AG04449 (cell line): ENCODE measurements at regions of chr15 and their contacts with region 1.

Region 1: GRCh38 chr15:81480645-81481053 is 106.6 kb upstream of the TMC3 start:
- DNase-seq: no peak
- H3K4me3 ChIP-seq: peak overlapping the region; percentile 29
- CTCF ChIP-seq: peak; percentile 30

Region 2: DNA sequence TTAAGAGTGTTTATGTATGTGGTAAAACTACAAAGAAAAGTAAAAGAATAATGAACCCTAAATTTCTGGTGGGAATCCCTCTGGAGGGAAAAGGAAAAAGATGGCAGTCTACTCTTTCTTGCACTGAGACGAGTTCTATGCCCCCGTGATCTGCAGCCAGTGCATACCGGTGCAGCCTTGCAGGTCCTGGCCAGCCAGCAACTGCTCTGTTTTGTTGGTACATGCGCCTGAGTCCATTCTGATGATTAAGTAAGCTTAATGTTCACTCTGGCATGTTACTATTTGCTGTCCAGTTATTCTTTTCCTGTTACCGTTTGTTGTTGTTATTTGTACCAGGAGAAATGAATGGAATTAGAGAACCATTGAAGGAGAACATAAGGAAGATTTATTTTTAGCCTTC is 11.5 kb before region 1 on chr15:
- CTCF ChIA-PET with region 1: interaction called, 16 read pairs
- POLR2A ChIA-PET with region 1: no interaction called
- DNase-seq: no peak
- H3K4me3 ChIP-seq: no peak overlapping the region
- CTCF ChIP-seq: no peak

Region 3: DNA sequence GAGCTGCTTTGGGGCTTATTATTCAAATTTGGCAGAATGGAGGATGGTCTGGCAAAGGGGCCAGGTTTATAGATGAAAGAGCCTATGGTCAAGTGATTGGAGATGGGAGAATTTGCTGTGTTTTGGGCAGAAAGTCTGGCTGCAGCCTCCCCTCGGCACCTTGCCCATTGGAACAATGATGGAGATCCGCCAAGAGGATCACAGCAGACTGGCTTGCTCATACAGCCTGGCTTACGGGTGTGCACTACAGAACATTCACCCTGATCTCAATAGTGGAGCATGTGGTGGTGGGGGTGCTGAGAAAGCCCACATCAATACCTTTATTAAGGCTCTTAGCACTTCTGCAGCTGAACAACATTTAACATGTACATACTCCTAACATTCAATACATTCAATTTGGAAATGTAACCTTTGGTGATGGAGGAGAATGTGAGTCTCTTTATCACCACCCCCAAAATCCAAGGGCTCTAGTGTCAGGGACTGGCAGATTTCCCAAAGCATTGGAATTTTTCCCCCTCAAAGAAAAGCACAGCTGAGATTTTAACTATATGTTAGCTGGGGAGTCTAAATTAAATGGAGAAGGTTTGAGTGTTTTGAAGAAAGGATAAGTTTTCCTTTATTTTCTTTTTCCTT is 11.8 kb after region 1 on chr15:
- CTCF ChIA-PET with region 1: interaction called, 16 read pairs
- POLR2A ChIA-PET with region 1: no interaction called
- DNase-seq: no peak
- H3K4me3 ChIP-seq: no peak overlapping the region
- CTCF ChIP-seq: no peak

Region 4: DNA sequence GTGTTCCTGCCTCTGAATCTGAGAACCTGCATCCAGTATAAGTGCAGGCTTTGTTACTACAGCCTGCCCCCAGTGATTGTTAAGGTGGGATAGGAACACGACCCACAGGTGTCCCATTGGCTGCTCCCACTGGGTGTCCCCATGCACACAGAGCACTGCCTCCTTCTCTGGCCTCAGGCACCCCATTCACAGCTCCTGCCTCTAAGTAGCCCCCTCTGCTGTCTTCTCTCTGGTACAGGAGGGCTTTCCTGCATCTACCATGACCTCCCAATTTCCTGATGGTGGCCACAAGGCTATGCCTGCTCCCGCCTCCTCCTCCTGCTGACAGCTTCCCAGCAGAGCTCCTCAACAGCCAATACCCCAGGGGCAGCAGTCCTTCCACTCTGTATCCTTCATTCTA is 132.0 kb after region 1 on chr15:
- CTCF ChIA-PET with region 1: no interaction called
- POLR2A ChIA-PET with region 1: no interaction called
- DNase-seq: no peak
- H3K4me3 ChIP-seq: no peak overlapping the region
- CTCF ChIP-seq: no peak

Region 5: DNA sequence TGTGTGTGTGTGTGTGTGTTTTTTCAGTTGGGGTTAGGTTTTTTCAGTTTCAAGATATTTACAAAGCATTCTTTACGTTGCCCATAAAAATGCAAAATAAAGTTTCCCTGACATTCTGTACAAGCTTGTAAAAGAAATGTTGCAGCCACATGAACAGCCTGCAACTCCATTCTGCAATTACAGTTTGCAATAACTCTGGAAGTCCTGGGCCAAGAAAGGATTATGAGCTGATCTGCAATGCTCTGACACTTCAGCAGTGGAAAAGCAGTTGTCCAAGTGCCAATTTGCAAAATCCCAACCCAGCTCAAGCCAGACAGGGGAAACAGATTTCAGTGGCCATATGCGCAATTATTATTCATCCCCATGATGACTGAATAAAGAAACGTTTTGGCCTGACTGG is 243.1 kb after region 1 on chr15:
- CTCF ChIA-PET with region 1: no interaction called
- POLR2A ChIA-PET with region 1: no interaction called
- DNase-seq: no peak
- H3K4me3 ChIP-seq: no peak overlapping the region
- CTCF ChIP-seq: no peak

Region 6: DNA sequence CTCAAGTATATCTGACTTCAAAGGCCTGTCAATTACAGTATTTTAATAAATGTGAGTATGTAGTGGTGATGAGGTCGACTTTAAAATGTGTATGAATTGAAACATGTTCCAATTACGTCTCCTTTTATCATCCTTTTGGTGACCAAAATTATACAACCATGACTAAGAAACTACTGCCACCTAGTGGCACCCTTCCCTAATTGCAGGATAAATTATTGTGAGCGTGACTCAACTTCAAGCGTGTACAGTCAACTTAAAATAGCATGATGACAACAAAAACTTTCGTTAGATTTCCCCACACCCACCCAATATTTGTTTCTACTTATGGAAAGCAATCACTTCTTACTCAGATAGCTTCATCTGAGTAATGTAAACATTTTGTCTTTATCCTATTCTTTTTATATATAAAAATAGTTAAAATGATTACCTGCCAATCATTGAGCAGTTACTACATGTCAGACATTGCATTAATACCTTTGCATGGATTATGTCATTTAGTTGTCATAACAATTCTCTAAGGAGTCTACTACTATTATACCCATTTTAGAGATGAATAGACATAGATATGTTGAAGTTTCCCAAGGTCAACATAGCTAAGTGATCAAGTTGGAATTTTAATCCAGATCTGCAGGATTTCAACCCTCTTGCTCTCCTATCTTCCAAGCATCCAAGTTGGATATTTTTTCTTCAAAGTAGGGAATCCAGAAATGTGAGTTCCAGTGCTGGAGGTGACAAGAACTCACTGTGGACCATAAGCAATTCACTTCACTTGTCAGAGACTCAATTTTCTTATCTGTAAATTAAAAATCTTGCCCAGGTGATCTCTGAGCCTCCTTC is 459.2 kb after region 1 on chr15:
- CTCF ChIA-PET with region 1: interaction called, 21 read pairs
- POLR2A ChIA-PET with region 1: no interaction called
- DNase-seq: no peak
- H3K4me3 ChIP-seq: no peak overlapping the region
- CTCF ChIP-seq: peak; percentile 38

Region 7: DNA sequence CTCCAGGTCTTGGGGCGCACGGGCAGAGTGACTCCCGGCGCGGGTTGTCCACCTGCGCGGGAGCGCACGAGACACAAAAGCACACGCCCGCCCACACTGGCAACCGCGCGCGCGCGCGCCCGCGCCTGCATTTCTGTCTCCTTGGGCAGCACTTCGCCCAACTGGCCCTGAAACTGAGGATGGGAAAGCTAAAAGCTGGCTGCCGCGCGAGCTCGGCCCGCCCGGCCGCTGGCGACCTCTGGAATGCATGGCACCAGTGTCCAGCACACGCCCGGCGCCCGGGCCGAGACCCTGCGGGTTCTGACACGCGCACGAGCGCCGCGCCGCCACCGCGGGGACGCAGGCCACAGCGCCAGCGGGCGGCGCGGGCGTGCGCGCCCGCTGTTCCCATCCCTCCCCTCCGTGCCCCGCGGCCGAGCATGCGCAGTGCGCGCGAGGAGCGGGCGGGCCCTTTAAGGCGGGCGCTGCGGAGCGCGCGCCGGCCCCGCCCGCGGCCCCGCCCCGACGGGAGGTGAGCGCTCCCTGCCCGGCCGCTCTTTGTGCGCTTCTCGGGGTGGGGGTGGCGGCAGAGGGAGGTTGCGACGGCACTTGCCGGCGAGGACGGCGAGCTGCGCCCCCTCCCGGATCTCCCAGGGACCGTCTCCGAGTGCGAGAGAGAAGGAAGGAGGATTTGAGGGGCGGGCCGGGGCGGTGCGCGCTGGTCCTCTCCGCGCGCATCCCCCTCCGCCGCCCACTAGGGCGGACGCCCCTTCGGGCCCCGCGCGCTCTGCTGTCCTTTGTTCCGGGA is 566.2 kb after region 1 on chr15:
- CTCF ChIA-PET with region 1: interaction called, 10 read pairs
- POLR2A ChIA-PET with region 1: no interaction called
- DNase-seq: peak; percentile 33
- H3K4me3 ChIP-seq: peak overlapping the region; percentile 86
- CTCF ChIP-seq: peak; percentile 92

Region 8: GRCh38 chr15:82103468-82103867 is 622.8 kb after region 1 on chr15:
- CTCF ChIA-PET with region 1: interaction called, 25 read pairs
- POLR2A ChIA-PET with region 1: no interaction called
- DNase-seq: no peak
- H3K4me3 ChIP-seq: no peak overlapping the region
- CTCF ChIP-seq: peak; percentile 28